Activated CD8-positive, alpha-beta T cell treated with anti-CD3 and anti-CD28 coated beads for 36 hours (primary cell): ENCODE measurements at regions of chr1 and their contacts with region 1.

Region 1: DNA sequence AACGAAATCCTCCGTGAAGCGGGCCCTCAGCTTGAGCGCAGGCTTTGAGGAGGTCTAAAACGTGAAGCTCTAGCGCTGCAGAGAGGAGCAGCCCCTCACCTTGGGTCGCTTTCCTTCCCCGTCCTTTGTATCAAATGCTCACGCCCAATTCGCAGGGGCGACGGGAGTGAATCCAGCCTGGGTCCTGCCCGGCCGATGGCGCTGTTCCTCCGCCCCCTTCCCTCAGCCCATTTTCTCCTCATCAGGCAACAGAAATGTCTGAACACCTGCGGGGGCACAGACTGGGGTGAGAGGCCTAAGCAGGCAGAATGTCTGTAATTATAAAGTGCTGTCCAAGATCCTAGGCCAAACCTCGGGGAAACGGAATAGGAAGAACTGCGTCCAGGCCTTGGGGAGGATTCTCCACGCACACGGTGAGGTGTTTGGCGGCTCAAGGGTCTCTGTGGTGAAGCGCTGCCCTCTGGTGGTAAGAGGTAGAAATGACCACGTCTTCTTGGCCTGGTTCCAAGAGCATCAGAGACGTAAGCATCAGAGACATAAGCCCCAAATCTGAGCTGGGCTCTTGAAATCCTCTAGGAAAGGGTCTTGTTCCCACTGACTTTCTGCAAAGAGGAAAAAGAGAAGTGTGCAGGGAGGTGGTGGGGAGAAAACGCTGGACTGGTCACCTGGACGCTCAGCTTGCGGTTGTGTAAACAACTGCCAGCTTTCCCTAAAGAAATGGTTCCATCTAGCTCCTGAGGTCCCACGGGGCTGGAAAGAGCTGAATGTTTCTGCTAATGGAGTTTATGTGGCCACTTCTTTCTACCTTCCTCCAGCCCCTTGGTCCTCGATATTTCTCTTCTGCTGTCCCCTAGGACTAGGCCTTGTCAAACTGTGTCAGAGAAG is 92.1 kb upstream of the CD53 start:
- DNase-seq: peak; percentile 85
- ATAC-seq: peak; percentile 80
- H3K4me3 Mint-ChIP-seq: peak overlapping the region; percentile 26
- H3K27ac Mint-ChIP-seq: no peak overlapping the region
- H3K4me1 Mint-ChIP-seq: peaks cover 33% of the 10 kb centered on the region
- H3K27me3 Mint-ChIP-seq: peaks cover 2% of the 10 kb centered on the region
- CTCF ChIP-seq: peak; percentile 79

Region 2: DNA sequence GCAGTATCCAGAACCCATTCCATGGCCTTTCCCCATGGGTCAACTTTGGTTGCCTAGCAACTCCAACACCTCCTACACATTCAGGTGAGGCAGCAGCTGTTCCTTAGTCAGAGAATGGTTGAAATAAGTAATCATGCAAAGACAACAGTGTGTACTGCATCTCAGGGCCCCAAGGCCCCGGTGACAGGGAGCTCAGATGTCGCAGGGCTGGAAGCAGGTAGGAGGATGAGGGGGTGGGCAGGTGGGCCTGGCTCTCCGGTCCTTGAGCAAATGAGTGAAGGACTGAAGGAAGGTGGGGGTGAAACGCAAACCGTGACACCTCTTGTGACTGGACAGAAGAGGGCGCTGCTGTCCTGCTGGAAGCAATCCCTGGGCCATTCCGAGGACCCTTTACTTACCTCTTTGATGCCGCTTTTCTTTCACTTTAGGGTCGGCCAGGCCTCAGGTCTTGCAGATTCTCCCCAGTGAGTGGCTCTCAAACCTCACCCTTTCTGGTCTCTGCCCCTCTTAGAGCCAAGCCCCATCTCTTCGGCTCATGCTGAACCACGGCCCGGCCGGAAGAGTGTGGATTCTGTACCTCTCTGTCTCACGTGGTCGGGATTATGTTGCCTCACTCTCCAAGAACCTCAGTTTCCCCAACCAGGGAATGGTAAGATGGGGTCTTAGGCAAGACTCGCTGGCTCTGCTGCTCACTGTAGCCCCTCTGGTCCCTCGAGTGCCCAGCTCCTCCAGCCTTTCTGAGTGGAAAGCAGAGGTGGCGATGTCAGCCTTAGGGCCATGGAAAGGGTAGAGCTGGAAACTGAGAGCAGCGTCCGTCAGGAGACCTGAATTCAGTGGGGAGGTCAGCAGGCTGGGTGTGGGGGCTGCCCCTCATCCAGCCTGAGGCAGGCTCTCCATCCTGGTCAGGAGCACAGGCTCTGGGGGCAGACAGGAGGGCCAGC is 256.3 kb before region 1 on chr1:
- CTCF ChIA-PET with region 1: interaction called, 114 read pairs
- POLR2A ChIA-PET with region 1: no interaction called
- intact Hi-C with region 1: loop called (anchors 5 kb)
- DNase-seq: peak; percentile 69
- ATAC-seq: peak; percentile 92
- H3K4me3 Mint-ChIP-seq: no peak overlapping the region
- H3K27ac Mint-ChIP-seq: no peak overlapping the region
- H3K4me1 Mint-ChIP-seq: no peaks in the 10 kb centered on the region
- H3K27me3 Mint-ChIP-seq: peaks cover 10% of the 10 kb centered on the region
- CTCF ChIP-seq: peak; percentile 89

Region 3: GRCh38 chr1:110612065-110612751 is 168.6 kb before region 1 on chr1:
- CTCF ChIA-PET with region 1: interaction called, 196 read pairs
- POLR2A ChIA-PET with region 1: interaction called, 3 read pairs
- intact Hi-C with region 1: no loop called
- DNase-seq: no peak
- ATAC-seq: no peak
- H3K4me3 Mint-ChIP-seq: no peak overlapping the region
- H3K27ac Mint-ChIP-seq: no peak overlapping the region
- H3K4me1 Mint-ChIP-seq: peaks cover 6% of the 10 kb centered on the region
- H3K27me3 Mint-ChIP-seq: peaks cover 14% of the 10 kb centered on the region
- CTCF ChIP-seq: no peak

Region 4: GRCh38 chr1:110674337-110675059 is 106.3 kb before region 1 on chr1 and contains the start of gene KCNA3:
- CTCF ChIA-PET with region 1: interaction called, 11 read pairs
- POLR2A ChIA-PET with region 1: interaction called, 3 read pairs
- intact Hi-C with region 1: no loop called
- DNase-seq: peak; percentile 74
- ATAC-seq: peak; percentile 28
- H3K4me3 Mint-ChIP-seq: peak within 1 kb of the TSS; percentile 100
- H3K27ac Mint-ChIP-seq: peak within 1 kb of the TSS; percentile 98
- H3K4me1 Mint-ChIP-seq: peaks cover 30% of the 10 kb centered on the region
- H3K27me3 Mint-ChIP-seq: no peaks in the 10 kb centered on the region
- CTCF ChIP-seq: peak; percentile 47
- total RNA-seq, gene KCNA3: 15.5 to 16.2 TPM

Region 5: GRCh38 chr1:110829955-110830553 is 49.2 kb after region 1 on chr1:
- CTCF ChIA-PET with region 1: interaction called, 110 read pairs
- POLR2A ChIA-PET with region 1: no interaction called
- intact Hi-C with region 1: loop called (anchors 2 kb)
- DNase-seq: peak; percentile 22
- ATAC-seq: peak; percentile 97
- H3K4me3 Mint-ChIP-seq: no peak overlapping the region
- H3K27ac Mint-ChIP-seq: no peak overlapping the region
- H3K4me1 Mint-ChIP-seq: peaks cover 9% of the 10 kb centered on the region
- H3K27me3 Mint-ChIP-seq: no peaks in the 10 kb centered on the region
- CTCF ChIP-seq: peak; percentile 92

Region 6: DNA sequence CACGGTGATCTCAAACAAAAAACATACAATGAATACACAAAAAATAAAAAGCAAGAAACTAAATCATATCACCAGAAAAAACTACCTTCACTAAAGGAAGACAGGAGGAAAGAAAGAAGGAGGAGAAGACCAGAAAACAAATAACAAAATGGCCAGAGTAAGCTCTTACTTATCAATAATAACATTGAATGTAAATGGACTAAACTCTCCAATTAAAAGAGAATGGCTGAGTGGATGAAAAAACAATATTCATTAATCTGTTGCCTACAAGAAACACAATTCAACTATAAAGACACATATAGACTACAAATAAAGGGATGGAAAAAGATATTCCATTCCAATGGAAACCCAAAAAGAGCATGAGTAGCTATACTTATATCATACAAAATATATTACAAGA is 155.7 kb after region 1 on chr1:
- CTCF ChIA-PET with region 1: no interaction called
- POLR2A ChIA-PET with region 1: no interaction called
- intact Hi-C with region 1: no loop called
- DNase-seq: no peak
- ATAC-seq: no peak
- H3K4me3 Mint-ChIP-seq: no peak overlapping the region
- H3K27ac Mint-ChIP-seq: no peak overlapping the region
- H3K4me1 Mint-ChIP-seq: no peaks in the 10 kb centered on the region
- H3K27me3 Mint-ChIP-seq: no peaks in the 10 kb centered on the region
- CTCF ChIP-seq: no peak

Region 7: GRCh38 chr1:111030590-111030989 is 249.7 kb after region 1 on chr1:
- CTCF ChIA-PET with region 1: interaction called, 22 read pairs
- POLR2A ChIA-PET with region 1: no interaction called
- intact Hi-C with region 1: loop called (anchors 10 kb)
- DNase-seq: peak; percentile 75
- ATAC-seq: peak; percentile 67
- H3K4me3 Mint-ChIP-seq: no peak overlapping the region
- H3K27ac Mint-ChIP-seq: no peak overlapping the region
- H3K4me1 Mint-ChIP-seq: no peaks in the 10 kb centered on the region
- H3K27me3 Mint-ChIP-seq: peaks cover 5% of the 10 kb centered on the region
- CTCF ChIP-seq: peak; percentile 79